ENCODE measurements at regions of chrX and their contacts with region 1.

Region 1: DNA sequence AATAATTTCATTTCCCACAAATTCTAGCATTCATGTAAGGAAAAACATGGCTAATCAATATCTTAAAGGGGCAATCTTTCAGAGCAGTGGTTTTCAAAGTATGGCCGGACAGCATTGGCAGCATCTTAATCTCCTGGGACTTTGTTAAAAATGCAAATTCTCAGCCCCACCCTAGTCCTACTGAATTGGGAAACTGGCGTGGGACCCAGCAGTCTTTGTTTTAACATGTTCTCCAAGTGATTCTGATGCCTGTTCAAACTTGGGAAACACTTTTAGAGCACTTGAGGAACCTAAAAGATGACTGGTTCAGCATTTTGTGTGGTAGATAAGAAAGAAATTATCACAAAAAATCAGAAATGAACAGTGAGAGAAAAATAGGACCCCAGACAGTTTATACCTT is 65.7 kb downstream of the ZFX start:
- DNase-seq: no peak
- ATAC-seq: no peak
- H3K4me3 ChIP-seq: no peak overlapping the region
- H3K27ac ChIP-seq: no peak overlapping the region
- H3K4me1 ChIP-seq: no peaks in the 10 kb centered on the region
- H3K27me3 ChIP-seq: no peaks in the 10 kb centered on the region
- CTCF ChIP-seq: no peak
- POLR2A ChIP-seq: no peak
- RAD21 ChIP-seq: no peak

Region 2: GRCh38 chrX:24173115-24173847 is 42.0 kb before region 1 on chrX:
- CTCF ChIA-PET with region 1: no interaction called
- POLR2A ChIA-PET with region 1: no interaction called
- dilution Hi-C with region 1: no loop called
- in situ Hi-C with region 1: no loop called
- intact Hi-C with region 1: loop called (anchors 5 kb)
- DNase-seq: no peak
- ATAC-seq: no peak
- H3K4me3 ChIP-seq: no peak overlapping the region
- H3K27ac ChIP-seq: no peak overlapping the region
- H3K4me1 ChIP-seq: peaks cover 9% of the 10 kb centered on the region
- H3K27me3 ChIP-seq: no peaks in the 10 kb centered on the region
- CTCF ChIP-seq: no peak
- POLR2A ChIP-seq: no peak
- RAD21 ChIP-seq: no peak

Region 3: DNA sequence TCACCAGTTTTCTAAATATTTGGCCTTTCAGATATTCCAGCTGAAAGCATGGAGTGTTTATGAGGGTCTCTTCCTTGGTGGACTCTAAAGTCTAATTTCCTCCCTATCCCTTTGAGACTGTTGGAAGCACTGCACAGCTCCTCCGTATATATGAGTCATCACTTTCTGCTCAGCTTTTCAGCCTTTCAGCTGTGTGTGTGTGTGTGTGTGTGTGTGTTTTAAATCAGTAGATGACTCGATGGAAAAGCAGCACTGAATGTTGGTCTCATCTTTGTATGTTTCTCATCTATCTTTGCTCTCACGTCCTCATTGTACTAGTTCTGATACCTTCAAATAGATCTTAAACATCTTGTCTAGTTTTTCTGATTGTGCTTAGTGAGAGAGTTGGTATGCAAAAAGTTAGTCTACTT is 15.9 kb after region 1 on chrX:
- CTCF ChIA-PET with region 1: no interaction called
- POLR2A ChIA-PET with region 1: interaction called, 10 read pairs
- dilution Hi-C with region 1: no loop called
- in situ Hi-C with region 1: no loop called
- intact Hi-C with region 1: loop called (anchors 1 kb)
- DNase-seq: peak; percentile 93
- ATAC-seq: peak; percentile 97
- H3K4me3 ChIP-seq: no peak overlapping the region
- H3K27ac ChIP-seq: no peak overlapping the region
- H3K4me1 ChIP-seq: peaks cover 2% of the 10 kb centered on the region; the same call in 1 of the 2 replicates
- H3K27me3 ChIP-seq: peaks cover 4% of the 10 kb centered on the region
- CTCF ChIP-seq: no peak
- POLR2A ChIP-seq: no peak
- RAD21 ChIP-seq: no peak

Region 4: GRCh38 chrX:24241822-24242648 is 26.8 kb after region 1 on chrX:
- CTCF ChIA-PET with region 1: no interaction called
- POLR2A ChIA-PET with region 1: no interaction called
- dilution Hi-C with region 1: no loop called
- in situ Hi-C with region 1: no loop called
- intact Hi-C with region 1: no loop called
- DNase-seq: peak; percentile 39
- ATAC-seq: peak; percentile 65; the same call in 1 of the 2 replicates
- H3K4me3 ChIP-seq: no peak overlapping the region
- H3K27ac ChIP-seq: no peak overlapping the region
- H3K4me1 ChIP-seq: no peaks in the 10 kb centered on the region
- H3K27me3 ChIP-seq: peaks cover 4% of the 10 kb centered on the region; the same call in 1 of the 2 replicates
- CTCF ChIP-seq: peak; percentile 49
- POLR2A ChIP-seq: no peak
- RAD21 ChIP-seq: peak; percentile 57